MCF 10A (cell line): ENCODE measurements at regions of chr1 and their contacts with region 1.

Region 1: DNA sequence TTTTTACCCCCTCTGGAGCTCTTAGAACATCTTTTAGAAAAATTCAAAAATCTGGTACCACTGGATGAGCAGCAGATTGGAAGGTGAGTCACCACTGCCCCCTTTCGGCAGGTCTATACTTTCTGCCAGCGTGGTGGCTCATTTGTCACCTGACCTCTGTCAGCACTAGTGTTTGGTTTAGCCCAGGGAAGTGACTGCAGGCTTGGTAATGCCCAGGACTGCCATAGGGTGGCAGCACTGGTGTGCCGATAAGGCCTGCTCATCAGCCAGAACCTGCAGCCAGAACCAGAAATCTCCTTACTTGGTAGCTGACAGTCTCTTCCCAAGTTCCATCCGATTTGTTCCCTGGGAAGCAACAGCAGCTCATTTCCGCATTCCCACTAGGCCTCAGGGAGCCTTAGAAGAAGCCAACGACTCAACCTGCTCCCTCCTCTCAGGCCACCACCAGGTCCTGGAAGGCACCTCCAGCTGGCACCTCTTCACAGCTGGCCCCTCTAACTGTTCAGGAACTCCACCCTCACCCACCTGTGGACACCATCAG is 6.8 kb downstream of the SMIM12 start:
- DNase-seq: peak; percentile 94
- H3K4me3 Mint-ChIP-seq: no peak overlapping the region
- H3K27ac Mint-ChIP-seq: no peak overlapping the region
- H3K4me1 Mint-ChIP-seq: peaks cover 10% of the 10 kb centered on the region
- H3K27me3 Mint-ChIP-seq: no peaks in the 10 kb centered on the region
- CTCF ChIP-seq: peak; percentile 92

Region 2: DNA sequence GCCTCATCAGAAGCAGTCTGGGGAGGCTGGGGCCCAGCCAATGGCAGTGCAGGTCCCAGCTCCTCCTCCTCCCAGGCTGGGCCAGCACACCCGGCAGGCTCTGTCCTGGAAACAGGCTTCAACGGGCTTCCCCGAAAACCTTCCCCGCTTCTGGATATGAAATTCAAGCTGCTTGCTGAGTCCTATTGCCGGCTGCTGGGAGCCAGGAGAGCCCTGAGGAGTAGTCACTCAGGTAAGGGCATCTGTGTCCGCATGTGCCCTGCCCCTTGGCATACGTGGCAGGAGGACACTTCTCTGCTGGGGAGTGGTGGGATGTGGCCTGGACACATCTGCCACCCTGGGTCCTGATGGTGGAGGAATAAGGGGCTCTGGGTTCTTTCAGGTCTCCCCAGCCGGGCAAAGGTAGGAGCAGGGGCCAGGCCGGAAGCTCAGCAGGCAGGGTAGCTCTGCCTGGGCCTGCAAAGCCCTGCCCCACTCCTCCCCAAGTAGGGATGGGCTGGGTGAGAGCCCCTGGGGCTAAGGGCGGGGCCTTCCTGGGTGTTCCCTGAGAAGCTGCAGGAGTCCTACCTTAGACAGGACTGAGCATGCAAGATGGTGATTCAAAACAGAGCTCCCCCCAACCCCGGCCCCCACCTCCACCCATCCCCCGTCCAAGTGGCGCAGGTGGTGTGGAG is 97.6 kb before region 1 on chr1 and contains the start of gene GJB5:
- CTCF ChIA-PET with region 1: interaction called, 10 read pairs
- POLR2A ChIA-PET with region 1: interaction called, 4 read pairs
- intact Hi-C with region 1: no loop called
- DNase-seq: peak; percentile 94
- H3K4me3 Mint-ChIP-seq: peak within 1 kb of the TSS; percentile 93
- H3K27ac Mint-ChIP-seq: peak within 1 kb of the TSS; percentile 96
- H3K4me1 Mint-ChIP-seq: peaks cover 16% of the 10 kb centered on the region
- H3K27me3 Mint-ChIP-seq: no peaks in the 10 kb centered on the region
- CTCF ChIP-seq: no peak
- total RNA-seq, gene GJB5: 26.5 and 33.2 TPM in 2 replicates

Region 3: GRCh38 chr1:34808051-34808810 is 44.5 kb before region 1 on chr1:
- CTCF ChIA-PET with region 1: interaction called, 12 read pairs
- POLR2A ChIA-PET with region 1: no interaction called
- intact Hi-C with region 1: no loop called
- DNase-seq: no peak
- H3K4me3 Mint-ChIP-seq: no peak overlapping the region
- H3K27ac Mint-ChIP-seq: no peak overlapping the region
- H3K4me1 Mint-ChIP-seq: no peaks in the 10 kb centered on the region
- H3K27me3 Mint-ChIP-seq: no peaks in the 10 kb centered on the region
- CTCF ChIP-seq: no peak

Region 4: DNA sequence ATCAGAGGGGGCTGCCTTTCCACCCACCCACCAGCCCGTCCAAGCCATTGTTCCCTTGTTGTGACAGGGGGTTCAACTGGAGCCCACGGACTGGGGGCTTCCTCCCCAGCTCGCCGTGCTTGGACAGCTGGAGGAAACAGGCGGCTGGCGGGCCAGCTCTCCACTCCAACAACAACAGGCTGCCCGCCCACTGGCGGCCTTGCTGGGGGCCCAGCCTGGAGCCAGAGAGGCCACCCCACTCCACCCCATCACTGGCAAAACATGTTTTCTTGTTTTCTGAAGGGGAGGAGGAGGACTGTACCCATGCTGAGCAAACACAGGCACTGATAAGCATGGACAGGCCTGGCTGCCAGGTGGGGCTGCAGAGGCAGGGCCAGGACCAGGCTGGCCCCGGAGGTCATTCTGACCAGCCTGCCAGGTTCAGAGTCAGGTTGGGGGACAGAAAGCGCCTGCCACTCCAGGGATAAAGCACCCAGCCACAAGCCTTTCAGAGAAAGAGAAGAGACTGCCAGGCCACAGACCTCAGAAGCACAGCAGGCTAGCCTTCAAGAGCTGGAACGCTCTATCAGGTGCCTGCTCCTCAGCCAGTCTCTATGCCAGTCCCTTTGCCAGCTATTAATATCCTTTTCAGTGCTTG is 27.2 kb before region 1 on chr1:
- CTCF ChIA-PET with region 1: interaction called, 14 read pairs
- POLR2A ChIA-PET with region 1: no interaction called
- intact Hi-C with region 1: no loop called
- DNase-seq: no peak
- H3K4me3 Mint-ChIP-seq: no peak overlapping the region
- H3K27ac Mint-ChIP-seq: no peak overlapping the region
- H3K4me1 Mint-ChIP-seq: no peaks in the 10 kb centered on the region
- H3K27me3 Mint-ChIP-seq: no peaks in the 10 kb centered on the region
- CTCF ChIP-seq: no peak

Region 5: GRCh38 chr1:35192853-35193664 is 340.3 kb after region 1 on chr1 and contains the start of gene SFPQ:
- CTCF ChIA-PET with region 1: no interaction called
- POLR2A ChIA-PET with region 1: no interaction called
- intact Hi-C with region 1: loop called (anchors 5 kb)
- DNase-seq: peak; percentile 99
- H3K4me3 Mint-ChIP-seq: peak within 1 kb of the TSS; percentile 85
- H3K27ac Mint-ChIP-seq: peak within 1 kb of the TSS; percentile 96
- H3K4me1 Mint-ChIP-seq: peaks cover 28% of the 10 kb centered on the region
- H3K27me3 Mint-ChIP-seq: no peaks in the 10 kb centered on the region
- CTCF ChIP-seq: no peak
- total RNA-seq, gene SFPQ: 275 and 314 TPM in 2 replicates